ENCODE measurements at regions of chr4 and their contacts with region 1.

Region 1: GRCh38 chr4:167014944-167015343 is 219.3 kb downstream of the SPOCK3 start:
- DNase-seq: no peak
- ATAC-seq: no peak
- H3K4me3 ChIP-seq: no peak overlapping the region
- H3K27ac ChIP-seq: no peak overlapping the region
- H3K4me1 ChIP-seq: no peaks in the 10 kb centered on the region
- H3K27me3 ChIP-seq: no peaks in the 10 kb centered on the region
- CTCF ChIP-seq: no peak

Region 2: DNA sequence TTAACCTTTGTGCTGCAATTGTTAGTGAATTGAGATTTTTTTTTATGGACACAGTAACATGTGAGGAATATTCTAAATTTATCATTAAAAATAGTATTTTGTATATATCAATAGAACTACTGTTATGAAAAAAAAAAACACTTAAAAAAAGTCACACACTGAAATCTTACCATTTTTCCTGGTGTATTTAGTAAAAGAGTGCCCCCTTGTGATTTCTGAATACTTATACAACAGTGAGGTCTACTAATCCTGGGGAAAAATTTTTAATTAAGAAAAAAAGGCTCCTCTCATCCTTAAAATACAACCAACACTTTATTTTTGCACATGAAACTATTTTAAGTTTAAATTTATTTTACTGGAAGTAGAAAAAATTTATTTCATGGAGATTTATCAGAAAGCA is 275.7 kb after region 1 on chr4:
- intact Hi-C with region 1: loop called in 9 of 10 experiments (anchors 2 to 10 kb)
- DNase-seq: no peak
- ATAC-seq: no peak
- H3K4me3 ChIP-seq: no peak overlapping the region
- H3K27ac ChIP-seq: no peak overlapping the region
- H3K4me1 ChIP-seq: no peaks in the 10 kb centered on the region
- H3K27me3 ChIP-seq: no peaks in the 10 kb centered on the region
- CTCF ChIP-seq: peak in 7 of 9 donors; percentile 23 to 52 (median 41)

Region 3: DNA sequence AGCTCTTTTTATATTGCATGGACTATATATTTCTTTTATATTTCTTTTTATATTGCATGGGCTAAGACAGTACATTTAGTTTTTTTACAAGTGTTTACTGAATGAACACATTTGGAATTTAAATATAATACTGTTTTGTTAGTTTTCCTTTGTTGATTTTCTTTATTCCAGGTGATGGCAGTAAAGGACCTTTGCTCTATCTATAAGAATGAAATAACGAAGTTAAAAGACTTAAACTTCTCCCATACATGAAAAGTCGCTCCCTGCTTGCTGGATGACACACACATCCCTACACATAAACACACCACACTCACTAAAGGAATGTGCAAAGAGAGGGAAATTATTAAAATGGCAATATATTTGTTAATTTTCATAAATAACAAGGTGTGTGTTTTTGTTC is 974.9 kb after region 1 on chr4:
- intact Hi-C with region 1: no loop called
- DNase-seq: no peak
- ATAC-seq: no peak
- H3K4me3 ChIP-seq: no peak overlapping the region
- H3K27ac ChIP-seq: no peak overlapping the region
- H3K4me1 ChIP-seq: no peaks in the 10 kb centered on the region
- H3K27me3 ChIP-seq: peaks cover 0 to 3% (median 0%) of the 10 kb centered on the region in 7 donors
- CTCF ChIP-seq: no peak

Measured in heart right ventricle (tissue), 16 donors.